Aorta (tissue), 5 donors: ENCODE measurements at regions of chr5 and their contacts with region 1.

Region 1: GRCh38 chr5:69217548-69218526 is 16.8 kb upstream of the CDK7 start:
- DNase-seq: peak; percentile 99 to 100
- ATAC-seq: peak; percentile 100
- H3K4me3 ChIP-seq: peak overlapping the region; percentile 57 to 74
- H3K27ac ChIP-seq: peak overlapping the region in 1 of 2 donors; percentile 81
- H3K4me1 ChIP-seq: no peaks in the 10 kb centered on the region
- H3K27me3 ChIP-seq: no peaks in the 10 kb centered on the region

Region 2: GRCh38 chr5:69166686-69167492 is 50.9 kb before region 1 on chr5 and contains the start of gene CCNB1:
- intact Hi-C with region 1: loop called in 1 of 2 experiments (anchors 10 kb)
- DNase-seq: peak; percentile 99
- ATAC-seq: peak; percentile 100
- H3K4me3 ChIP-seq: peak within 1 kb of the TSS; percentile 40 to 59
- H3K27ac ChIP-seq: no peak within 1 kb of the TSS
- H3K4me1 ChIP-seq: no peaks in the 10 kb centered on the region
- H3K27me3 ChIP-seq: no peaks in the 10 kb centered on the region
- total RNA-seq, gene CCNB1: 1.5 to 4.6 TPM

Region 3: GRCh38 chr5:69271376-69271775 is 53.5 kb after region 1 on chr5:
- intact Hi-C with region 1: loop called in 1 of 2 experiments (anchors 10 kb)
- DNase-seq: peak in 1 of 2 donors; percentile 52
- ATAC-seq: no peak
- H3K4me3 ChIP-seq: no peak overlapping the region
- H3K27ac ChIP-seq: peak overlapping the region in 1 of 2 donors; percentile 9
- H3K4me1 ChIP-seq: no peaks in the 10 kb centered on the region
- H3K27me3 ChIP-seq: no peaks in the 10 kb centered on the region